ENCODE measurements at regions of chr2 and their contacts with region 1.

Region 1: GRCh38 chr2:28276076-28276618 is 116.5 kb upstream of the FOSL2 start:
- DNase-seq: peak; percentile 38 to 96
- H3K4me3 ChIP-seq: peak overlapping the region; percentile 30; the same call in 1 of the 2 replicates
- H3K27ac ChIP-seq: peak overlapping the region; percentile 90
- H3K4me1 ChIP-seq: peaks cover 91% of the 10 kb centered on the region
- H3K27me3 ChIP-seq: no peaks in the 10 kb centered on the region
- CTCF ChIP-seq: no peak

Region 2: DNA sequence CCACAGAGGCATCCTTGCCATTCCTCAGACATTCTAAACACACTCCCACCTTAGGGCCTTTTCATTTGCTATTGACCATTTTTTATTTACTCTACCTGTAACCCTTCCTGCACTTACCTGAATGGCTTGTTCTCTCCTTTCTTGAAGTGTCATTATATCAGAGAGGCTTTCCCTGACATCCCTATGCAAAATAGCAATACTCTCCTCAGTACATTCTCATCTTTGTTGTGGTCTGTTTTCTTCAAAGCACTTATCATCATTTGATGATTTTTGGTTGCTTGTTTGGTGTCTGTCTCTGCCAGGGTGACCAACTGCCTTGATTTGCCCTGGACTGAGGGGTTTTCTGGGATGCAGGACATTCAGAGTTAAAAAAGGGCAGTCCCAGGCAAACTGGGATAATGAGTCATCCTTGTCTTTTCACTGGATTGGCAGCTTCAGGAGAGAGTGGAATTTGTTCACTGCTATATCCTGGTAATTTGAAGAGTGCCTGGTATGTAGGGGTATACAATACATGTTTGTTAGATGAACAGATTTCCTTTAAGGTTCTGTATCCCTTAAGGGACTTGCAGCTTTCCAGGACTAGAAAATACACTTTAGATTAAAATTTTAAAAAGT is 283.3 kb before region 1 on chr2:
- CTCF ChIA-PET with region 1: no interaction called
- POLR2A ChIA-PET with region 1: no interaction called
- intact Hi-C with region 1: loop called (anchors 10 kb)
- DNase-seq: peak; percentile 35 to 86
- H3K4me3 ChIP-seq: no peak overlapping the region; the same call in 1 of the 2 replicates
- H3K27ac ChIP-seq: peak overlapping the region; percentile 75
- H3K4me1 ChIP-seq: peaks cover 35% of the 10 kb centered on the region
- H3K27me3 ChIP-seq: no peaks in the 10 kb centered on the region
- CTCF ChIP-seq: no peak

Region 3: DNA sequence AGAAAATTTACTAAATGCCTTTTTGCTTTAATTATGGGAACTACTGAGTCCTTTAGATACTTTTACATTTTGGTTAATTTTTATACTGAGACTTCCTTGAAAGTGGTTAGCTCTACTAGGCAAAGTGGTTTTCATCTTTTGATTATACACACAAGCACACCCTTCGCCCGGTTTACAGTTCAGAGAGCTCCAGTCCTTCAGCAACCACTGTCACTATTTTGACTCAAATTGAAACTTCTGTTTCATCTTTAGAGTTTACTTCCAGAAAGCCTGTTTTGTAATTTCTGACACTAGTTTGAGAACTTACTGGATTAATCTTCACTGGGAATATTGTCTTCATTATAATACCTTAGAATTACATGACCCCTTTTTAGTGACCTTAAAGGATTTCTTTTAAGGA is 23.8 kb before region 1 on chr2:
- CTCF ChIA-PET with region 1: interaction called, 12 read pairs
- POLR2A ChIA-PET with region 1: interaction called, 16 read pairs
- intact Hi-C with region 1: no loop called
- DNase-seq: no peak
- H3K4me3 ChIP-seq: no peak overlapping the region
- H3K27ac ChIP-seq: no peak overlapping the region
- H3K4me1 ChIP-seq: peaks cover 20% of the 10 kb centered on the region
- H3K27me3 ChIP-seq: no peaks in the 10 kb centered on the region
- CTCF ChIP-seq: no peak

Region 4: DNA sequence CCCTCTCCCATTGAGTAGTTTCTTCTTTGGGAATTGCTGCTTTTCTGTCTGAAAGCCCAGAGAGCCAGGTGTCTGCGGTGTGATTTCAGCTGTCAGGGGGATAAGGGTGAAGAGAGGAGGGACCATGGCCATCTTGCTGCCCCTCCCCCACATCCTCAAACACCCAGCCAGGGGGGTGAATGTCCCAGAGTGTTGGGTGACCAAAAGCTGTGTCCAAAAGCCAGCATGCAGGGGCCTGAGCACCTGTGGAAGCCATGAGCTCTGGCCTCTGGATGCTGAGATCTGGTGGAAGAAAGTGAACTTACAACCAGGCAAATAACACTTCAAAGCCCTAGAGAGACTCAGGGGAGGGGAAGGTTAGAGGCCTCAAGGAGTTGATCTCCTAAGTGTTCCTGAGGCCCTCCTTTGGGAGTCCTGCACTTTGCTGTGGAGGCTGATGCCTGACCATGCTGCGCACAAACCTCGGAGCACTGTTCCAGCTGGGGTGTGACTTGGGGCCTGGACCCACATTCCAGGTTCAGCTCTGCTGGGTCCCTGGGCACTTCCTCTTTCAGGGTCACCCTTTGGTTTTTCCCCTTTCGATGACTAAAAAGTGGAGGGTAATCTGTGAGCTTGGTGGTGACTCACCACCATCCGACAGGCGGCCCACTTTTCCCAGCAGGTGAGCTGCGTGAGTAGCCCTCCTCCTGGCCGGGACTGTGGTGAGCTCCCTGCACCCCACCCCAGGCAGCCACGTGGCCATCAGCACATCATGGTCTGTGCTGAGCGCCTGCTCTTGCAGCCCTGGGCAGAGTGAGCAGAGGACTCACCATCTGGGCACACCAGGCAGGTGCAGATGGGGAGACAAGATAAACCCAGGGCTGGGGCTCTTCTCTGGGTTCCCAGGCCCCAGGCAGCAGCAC is 49.7 kb after region 1 on chr2:
- CTCF ChIA-PET with region 1: no interaction called
- POLR2A ChIA-PET with region 1: interaction called, 5 read pairs
- intact Hi-C with region 1: loop called (anchors 2 kb)
- DNase-seq: peak; percentile 86 to 95
- H3K4me3 ChIP-seq: no peak overlapping the region
- H3K27ac ChIP-seq: peak overlapping the region; percentile 78
- H3K4me1 ChIP-seq: peaks cover 41% of the 10 kb centered on the region
- H3K27me3 ChIP-seq: no peaks in the 10 kb centered on the region
- CTCF ChIP-seq: no peak; the same call in 1 of the 2 replicates

Measured in PC-9 (cell line).